ENCODE measurements at regions of chr16 and their contacts with region 1.

Region 1: DNA sequence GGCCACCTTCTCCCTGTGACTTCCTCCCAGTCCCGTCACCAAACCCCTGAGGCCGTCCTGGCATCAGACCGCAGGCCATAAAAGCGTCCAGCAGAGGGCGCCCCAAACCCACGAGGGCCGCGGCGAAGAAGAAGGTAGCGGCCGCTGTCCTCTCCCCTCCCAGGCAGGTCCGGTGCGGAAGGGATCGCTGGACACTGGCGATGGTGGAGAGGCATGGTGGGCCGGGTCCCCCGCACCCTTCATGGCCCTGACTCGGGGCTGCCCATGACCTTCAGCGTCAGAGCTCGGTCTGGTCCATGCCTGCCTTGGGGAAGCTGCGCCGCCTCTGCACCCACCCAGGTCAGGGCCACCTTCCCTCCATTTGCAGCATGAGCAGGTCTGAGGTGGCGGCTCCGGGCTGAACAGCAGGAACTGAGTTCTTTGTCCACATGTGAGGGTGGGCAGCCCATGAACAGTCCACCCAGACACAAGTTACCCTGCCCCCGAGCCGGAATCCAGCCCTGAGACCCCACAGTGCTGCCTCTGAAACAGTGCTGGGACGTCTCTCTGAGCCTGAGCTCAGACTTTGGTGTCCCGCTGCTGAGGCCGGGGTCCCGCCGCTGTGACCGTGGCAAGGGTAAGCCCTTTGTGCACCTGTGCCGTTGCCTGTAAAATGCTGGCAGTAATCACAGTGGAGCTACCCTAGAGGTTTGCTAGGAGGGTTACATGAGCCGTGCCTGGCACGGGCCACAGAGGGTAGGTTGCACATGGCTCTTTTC is 40.8 kb upstream of the CMIP start:
- DNase-seq: peak; percentile 75
- H3K4me3 Mint-ChIP-seq: no peak overlapping the region
- H3K27ac Mint-ChIP-seq: no peak overlapping the region
- H3K4me1 Mint-ChIP-seq: peaks cover 27% of the 10 kb centered on the region
- H3K27me3 Mint-ChIP-seq: no peaks in the 10 kb centered on the region
- CTCF ChIP-seq: peak; percentile 92

Region 2: DNA sequence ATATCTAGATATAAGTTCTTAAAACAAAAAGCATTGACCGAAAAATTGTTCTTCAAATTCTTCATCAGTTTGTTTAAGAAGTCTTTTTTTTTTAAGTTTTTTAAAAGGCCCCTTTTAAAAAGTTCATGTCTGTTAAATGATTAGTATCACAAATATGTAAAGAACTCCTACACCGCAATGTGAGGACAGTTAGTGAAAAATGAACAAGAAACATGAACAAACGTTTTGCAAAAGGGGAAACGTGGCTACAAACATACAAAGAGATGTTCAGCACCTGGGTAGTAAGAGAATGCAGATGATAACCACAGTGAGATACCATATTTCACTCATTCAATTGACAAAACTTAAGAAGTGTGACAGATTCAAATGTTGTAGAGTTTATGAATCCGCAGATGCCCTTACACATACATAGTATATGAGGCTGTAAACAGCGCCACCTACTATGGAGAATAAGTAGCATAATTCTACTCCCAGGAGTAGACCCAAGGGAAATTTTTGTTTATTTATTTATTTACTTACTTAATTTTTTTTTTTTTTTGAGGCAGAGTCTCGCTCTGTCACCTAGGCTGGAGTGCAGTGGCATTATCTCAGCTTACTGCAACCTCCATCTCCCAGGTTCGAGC is 53.7 kb before region 1 on chr16:
- CTCF ChIA-PET with region 1: no interaction called
- POLR2A ChIA-PET with region 1: no interaction called
- intact Hi-C with region 1: no loop called
- DNase-seq: peak; percentile 14
- H3K4me3 Mint-ChIP-seq: no peak overlapping the region
- H3K27ac Mint-ChIP-seq: no peak overlapping the region
- H3K4me1 Mint-ChIP-seq: no peaks in the 10 kb centered on the region
- H3K27me3 Mint-ChIP-seq: no peaks in the 10 kb centered on the region
- CTCF ChIP-seq: no peak

Region 3: GRCh38 chr16:81444448-81445121 is 40.8 kb after region 1 on chr16 and contains the start of gene CMIP:
- CTCF ChIA-PET with region 1: interaction called, 5 read pairs
- POLR2A ChIA-PET with region 1: interaction called, 18 read pairs
- intact Hi-C with region 1: loop called (anchors 1 kb)
- DNase-seq: peak; percentile 67
- H3K4me3 Mint-ChIP-seq: peak within 1 kb of the TSS; percentile 99
- H3K27ac Mint-ChIP-seq: peak within 1 kb of the TSS; percentile 93
- H3K4me1 Mint-ChIP-seq: peaks cover 23% of the 10 kb centered on the region
- H3K27me3 Mint-ChIP-seq: no peaks in the 10 kb centered on the region
- CTCF ChIP-seq: no peak
- total RNA-seq, gene CMIP: 44.3 and 53.6 TPM in 2 replicates

Region 4: DNA sequence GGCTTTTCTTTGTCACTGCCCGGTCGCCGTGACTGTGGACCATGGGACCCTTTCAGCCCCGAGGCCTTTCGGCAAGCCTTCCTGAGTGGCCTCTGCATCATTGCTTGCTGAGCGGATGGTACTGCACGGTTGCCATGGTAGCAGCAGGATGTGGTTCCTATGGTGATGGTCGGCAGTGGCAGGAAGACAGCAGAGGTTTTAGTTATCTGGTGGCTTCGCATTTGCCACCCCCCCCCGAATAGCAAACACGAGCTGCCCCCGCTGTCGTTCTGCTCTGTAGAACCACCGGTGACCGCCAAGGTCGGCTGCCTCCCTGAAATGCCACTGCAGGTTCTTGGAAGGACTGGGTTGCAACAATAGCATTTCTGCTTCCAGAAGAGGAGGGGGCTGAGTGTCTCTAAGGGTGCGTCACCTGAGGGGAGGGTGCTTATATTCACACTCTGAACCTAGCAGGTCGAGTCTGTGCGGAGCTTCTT is 117.4 kb after region 1 on chr16:
- CTCF ChIA-PET with region 1: interaction called, 5 read pairs
- POLR2A ChIA-PET with region 1: interaction called, 11 read pairs
- intact Hi-C with region 1: loop called (anchors 10 kb)
- DNase-seq: no peak
- H3K4me3 Mint-ChIP-seq: no peak overlapping the region
- H3K27ac Mint-ChIP-seq: peak overlapping the region; percentile 57
- H3K4me1 Mint-ChIP-seq: peaks cover 33% of the 10 kb centered on the region
- H3K27me3 Mint-ChIP-seq: no peaks in the 10 kb centered on the region
- CTCF ChIP-seq: no peak

Region 5: DNA sequence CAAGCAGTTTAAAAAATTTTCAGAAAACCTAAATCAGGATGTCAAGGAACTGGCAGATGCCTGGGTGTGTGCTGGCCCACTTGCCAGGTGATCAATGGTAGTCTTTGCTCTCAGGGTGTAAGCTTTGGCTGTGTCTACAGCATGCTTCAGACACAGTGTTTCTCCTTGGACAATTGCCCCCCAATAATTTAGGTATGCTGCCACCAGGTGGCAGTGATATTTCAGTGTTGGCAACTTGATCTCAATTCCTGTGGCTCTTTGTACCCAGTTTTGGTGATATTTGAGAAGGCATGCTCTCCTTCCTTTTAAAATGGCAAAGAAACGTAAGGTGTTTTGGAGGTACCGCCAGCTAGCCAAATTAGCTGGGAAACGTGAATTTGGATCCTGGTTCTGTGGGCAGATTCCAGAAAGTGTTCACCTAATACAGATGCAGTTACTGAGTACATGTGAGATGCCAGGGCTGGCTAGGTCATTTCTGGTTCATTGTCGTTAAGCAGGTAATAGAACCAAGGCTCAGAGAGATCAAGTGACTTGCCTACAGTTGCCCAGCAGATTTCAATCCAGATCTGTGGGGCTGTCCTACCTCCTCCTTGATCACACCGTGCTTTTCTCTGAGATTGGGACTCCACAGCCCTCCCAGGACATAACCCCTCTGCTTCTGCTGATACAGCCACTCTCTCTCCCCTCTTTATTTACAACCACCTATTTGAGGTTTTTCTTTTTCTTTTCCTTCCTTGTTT is 219.7 kb after region 1 on chr16:
- CTCF ChIA-PET with region 1: interaction called, 34 read pairs
- POLR2A ChIA-PET with region 1: interaction called, 5 read pairs
- intact Hi-C with region 1: loop called (anchors 1 kb)
- DNase-seq: peak; percentile 73
- H3K4me3 Mint-ChIP-seq: no peak overlapping the region
- H3K27ac Mint-ChIP-seq: no peak overlapping the region
- H3K4me1 Mint-ChIP-seq: peaks cover 9% of the 10 kb centered on the region
- H3K27me3 Mint-ChIP-seq: no peaks in the 10 kb centered on the region
- CTCF ChIP-seq: peak; percentile 64

Region 6: DNA sequence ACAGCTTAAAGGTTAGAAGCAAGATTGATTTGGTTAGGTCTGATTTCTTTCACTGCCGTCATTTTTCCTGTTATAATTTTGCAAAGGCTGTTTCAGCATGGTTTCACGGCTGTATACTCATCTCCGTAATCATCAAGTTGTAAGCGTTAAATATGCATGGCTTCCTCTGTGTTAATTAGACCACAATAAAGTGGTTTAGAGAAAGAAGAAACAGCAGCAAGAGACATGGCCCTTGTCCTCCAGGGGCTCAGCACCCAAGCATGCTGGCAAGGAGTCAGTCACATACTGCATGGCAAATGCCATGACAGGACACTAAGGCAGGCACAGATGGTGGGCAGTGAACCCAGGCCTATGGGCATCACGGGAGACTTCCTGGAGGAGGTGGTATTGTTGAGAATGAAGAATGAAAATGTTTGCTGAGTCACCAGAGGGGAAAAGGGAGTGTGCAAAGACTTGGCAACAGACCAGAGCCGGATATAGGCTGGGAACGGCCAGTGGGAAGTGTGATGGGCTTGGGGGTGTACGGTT is 313.9 kb after region 1 on chr16:
- CTCF ChIA-PET with region 1: interaction called, 65 read pairs
- POLR2A ChIA-PET with region 1: no interaction called
- intact Hi-C with region 1: no loop called
- DNase-seq: peak; percentile 54
- H3K4me3 Mint-ChIP-seq: peak overlapping the region; percentile 39
- H3K27ac Mint-ChIP-seq: no peak overlapping the region
- H3K4me1 Mint-ChIP-seq: peaks cover 21% of the 10 kb centered on the region
- H3K27me3 Mint-ChIP-seq: no peaks in the 10 kb centered on the region
- CTCF ChIP-seq: no peak

Region 7: DNA sequence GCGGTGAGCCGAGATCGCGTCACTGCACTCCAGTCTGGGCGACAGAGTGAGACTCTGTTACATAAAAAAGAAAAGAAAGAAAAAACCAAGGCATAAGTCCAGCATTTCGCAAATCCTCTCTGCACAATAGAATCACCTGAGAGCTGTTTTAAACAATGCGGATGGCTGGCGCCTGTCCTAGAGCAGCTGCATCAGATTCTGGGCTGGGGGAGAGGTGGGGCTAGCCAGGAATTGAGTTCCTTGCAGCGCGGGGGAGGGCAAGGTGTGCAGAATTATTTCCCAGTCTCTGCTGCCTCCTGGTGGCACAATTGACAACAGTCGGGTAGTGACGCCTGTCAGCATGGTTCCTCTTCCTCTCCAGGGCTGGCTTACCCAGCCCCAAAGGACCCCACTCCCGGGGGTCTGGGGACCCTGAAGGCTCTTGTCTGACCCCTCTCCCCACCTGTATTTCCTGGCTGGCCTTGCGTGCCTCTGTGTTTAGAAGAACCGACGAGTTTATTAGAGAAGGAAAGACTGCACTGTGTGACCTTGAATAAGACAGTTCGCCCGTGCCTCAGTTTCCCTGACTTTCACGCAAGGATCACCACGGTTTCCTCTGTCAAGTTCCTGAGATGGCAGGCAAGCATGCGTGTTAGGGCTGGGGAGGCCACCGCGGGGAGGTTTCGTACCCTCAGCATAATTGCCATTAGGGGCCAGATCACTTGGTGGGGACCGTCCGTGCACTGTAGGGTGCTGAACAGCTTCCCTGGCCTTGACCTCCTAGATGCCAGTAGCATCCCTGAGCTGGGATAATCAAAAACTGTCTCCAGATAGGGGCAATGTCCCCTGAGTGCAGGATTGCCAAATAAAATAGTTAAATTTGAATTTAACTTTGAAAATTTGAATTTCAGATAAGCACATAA is 334.3 kb after region 1 on chr16:
- CTCF ChIA-PET with region 1: interaction called, 4 read pairs
- POLR2A ChIA-PET with region 1: no interaction called
- intact Hi-C with region 1: loop called (anchors 5 kb)
- DNase-seq: peak; percentile 96
- H3K4me3 Mint-ChIP-seq: peak overlapping the region; percentile 52
- H3K27ac Mint-ChIP-seq: peak overlapping the region; percentile 51
- H3K4me1 Mint-ChIP-seq: no peaks in the 10 kb centered on the region
- H3K27me3 Mint-ChIP-seq: no peaks in the 10 kb centered on the region
- CTCF ChIP-seq: peak; percentile 86